ENCODE measurements at regions of chr1 and their contacts with region 1.

Region 1: GRCh38 chr1:200738740-200739498 is at the start of gene CAMSAP2:
- DNase-seq: peak; percentile 66
- H3K4me3 ChIP-seq: peak within 1 kb of the TSS; percentile 98
- H3K27ac ChIP-seq: peak within 1 kb of the TSS; percentile 96
- H3K27me3 ChIP-seq: no peaks in the 10 kb centered on the region
- CTCF ChIP-seq: no peak
- polyA plus RNA-seq, gene CAMSAP2: 18.0 and 24.2 TPM in 2 replicates

Region 2: GRCh38 chr1:200669314-200670241 is 69.3 kb before region 1 on chr1 and contains the start of gene DDX59:
- CTCF ChIA-PET with region 1: interaction called, 3 read pairs
- POLR2A ChIA-PET with region 1: interaction called, 17 read pairs
- DNase-seq: peak; percentile 94
- H3K4me3 ChIP-seq: peak within 1 kb of the TSS; percentile 86
- H3K27ac ChIP-seq: peak within 1 kb of the TSS; percentile 98
- H3K27me3 ChIP-seq: no peaks in the 10 kb centered on the region
- CTCF ChIP-seq: no peak
- polyA plus RNA-seq, gene DDX59: 10.8 and 15.0 TPM in 2 replicates

Region 3: GRCh38 chr1:200751717-200752116 is 12.8 kb after region 1 on chr1:
- CTCF ChIA-PET with region 1: no interaction called
- POLR2A ChIA-PET with region 1: no interaction called
- DNase-seq: no peak
- H3K4me3 ChIP-seq: no peak overlapping the region
- H3K27ac ChIP-seq: no peak overlapping the region
- H3K27me3 ChIP-seq: no peaks in the 10 kb centered on the region
- CTCF ChIP-seq: no peak

Region 4: GRCh38 chr1:200762099-200762498 is 23.2 kb after region 1 on chr1:
- CTCF ChIA-PET with region 1: no interaction called
- POLR2A ChIA-PET with region 1: no interaction called
- DNase-seq: no peak
- H3K4me3 ChIP-seq: no peak overlapping the region
- H3K27ac ChIP-seq: no peak overlapping the region
- H3K27me3 ChIP-seq: no peaks in the 10 kb centered on the region
- CTCF ChIP-seq: no peak

Region 5: DNA sequence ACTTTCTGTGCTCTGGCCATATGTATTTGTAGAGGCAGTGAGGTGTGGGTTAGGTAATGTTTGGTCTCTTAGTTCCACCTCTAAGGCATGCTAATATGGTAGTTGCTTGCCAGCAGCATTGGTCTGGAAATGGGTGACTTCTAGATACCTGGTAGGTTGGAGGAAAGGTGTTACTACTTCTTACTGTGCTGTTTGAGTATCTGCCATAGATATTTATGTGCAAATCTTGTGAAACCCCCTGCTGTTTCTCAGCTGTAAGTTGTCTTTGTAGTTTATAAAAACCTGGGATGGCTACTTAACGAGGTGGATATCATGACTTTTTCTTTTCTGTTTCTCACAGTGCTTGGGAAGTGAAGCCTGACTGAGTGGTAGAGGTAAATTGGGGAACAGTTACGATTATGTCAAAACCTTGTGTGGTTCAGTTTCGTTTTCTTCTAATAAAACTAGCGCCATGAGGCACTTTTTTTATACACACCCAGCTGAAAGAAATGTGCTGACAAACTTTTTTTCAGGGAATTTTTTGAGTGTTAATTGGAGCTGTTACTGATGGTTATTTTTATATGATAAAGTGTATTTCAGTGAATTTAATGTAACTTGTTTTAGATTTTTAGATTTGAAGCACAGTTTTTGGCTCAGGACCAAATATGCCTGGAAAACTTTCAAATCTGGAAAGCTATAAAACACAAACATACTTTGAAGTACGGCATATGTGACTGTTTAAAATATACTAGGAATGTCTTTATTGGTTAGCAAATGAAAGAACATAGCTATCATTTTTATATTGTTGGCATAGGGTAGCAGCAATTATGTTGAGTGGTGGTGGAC is 41.8 kb after region 1 on chr1:
- CTCF ChIA-PET with region 1: interaction called, 10 read pairs
- POLR2A ChIA-PET with region 1: no interaction called
- DNase-seq: no peak
- H3K4me3 ChIP-seq: peak overlapping the region; percentile 7; the same call in 1 of the 2 replicates
- H3K27ac ChIP-seq: no peak overlapping the region
- H3K27me3 ChIP-seq: no peaks in the 10 kb centered on the region
- CTCF ChIP-seq: no peak

Region 6: DNA sequence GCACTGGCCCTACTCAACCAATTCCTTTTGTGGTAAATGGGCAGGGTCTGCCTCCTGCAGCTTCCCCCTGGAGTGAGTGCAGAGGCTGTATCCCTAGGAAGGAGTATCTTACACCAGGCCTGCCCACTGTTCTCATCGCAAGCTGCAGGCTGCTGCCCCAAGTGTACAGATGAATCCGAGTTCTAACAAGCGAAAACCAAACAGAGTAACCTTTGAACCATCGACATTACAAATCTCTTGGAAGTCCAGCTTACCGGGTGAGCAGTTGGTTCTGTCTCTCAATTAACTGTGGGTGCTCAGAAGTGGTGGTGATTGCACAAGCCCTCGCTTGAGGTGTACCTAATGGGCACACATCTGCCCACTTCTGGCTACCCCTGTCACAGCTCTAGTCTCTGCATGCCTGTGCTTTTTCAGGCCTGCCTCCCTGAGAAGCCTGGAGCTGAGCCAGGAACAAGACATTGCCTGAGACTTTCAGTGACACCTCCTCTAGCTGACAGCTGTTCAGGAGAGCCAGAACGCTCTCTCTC is 178.4 kb after region 1 on chr1:
- CTCF ChIA-PET with region 1: no interaction called
- POLR2A ChIA-PET with region 1: no interaction called
- DNase-seq: no peak
- H3K4me3 ChIP-seq: no peak overlapping the region
- H3K27ac ChIP-seq: no peak overlapping the region
- H3K27me3 ChIP-seq: peaks cover 29% of the 10 kb centered on the region
- CTCF ChIP-seq: no peak